ENCODE measurements at regions of chr4 and their contacts with region 1.

Region 1: GRCh38 chr4:176492646-176493302 is 173.0 kb downstream of the SPCS3 start:
- DNase-seq: no peak
- H3K4me3 Mint-ChIP-seq: peak overlapping the region; percentile 49
- H3K27ac Mint-ChIP-seq: peak overlapping the region; percentile 62
- H3K4me1 Mint-ChIP-seq: peaks cover 11% of the 10 kb centered on the region
- H3K27me3 Mint-ChIP-seq: no peaks in the 10 kb centered on the region

Region 2: GRCh38 chr4:176902710-176903323 is 410.0 kb after region 1 on chr4:
- intact Hi-C with region 1: loop called (anchors 5 kb)
- DNase-seq: no peak
- H3K4me3 Mint-ChIP-seq: no peak overlapping the region
- H3K27ac Mint-ChIP-seq: peak overlapping the region; percentile 29
- H3K4me1 Mint-ChIP-seq: peaks cover 13% of the 10 kb centered on the region
- H3K27me3 Mint-ChIP-seq: peaks cover 3% of the 10 kb centered on the region